ENCODE measurements at regions of chr12 and their contacts with region 1.

Region 1: GRCh38 chr12:93569656-93570551 is 2.6 kb upstream of the SOCS2 start:
- DNase-seq: peak in 1 of 2 donors; percentile 95
- H3K4me3 ChIP-seq: peak overlapping the region; percentile 70 to 94
- H3K27ac ChIP-seq: peak overlapping the region; percentile 99
- H3K4me1 ChIP-seq: no peaks in the 10 kb centered on the region
- H3K27me3 ChIP-seq: no peaks in the 10 kb centered on the region
- CTCF ChIP-seq: peak; percentile 55 to 75 (median 75)
- POLR2A ChIP-seq: no peak

Region 2: GRCh38 chr12:93591137-93591868 is 21.4 kb after region 1 on chr12:
- intact Hi-C with region 1: loop called (anchors 2 kb)
- DNase-seq: peak in 1 of 2 donors; percentile 94
- H3K4me3 ChIP-seq: peak overlapping the region; percentile 51 to 62
- H3K27ac ChIP-seq: peak overlapping the region; percentile 89
- H3K4me1 ChIP-seq: peaks cover 34% of the 10 kb centered on the region
- H3K27me3 ChIP-seq: no peaks in the 10 kb centered on the region
- CTCF ChIP-seq: no peak
- POLR2A ChIP-seq: peak in 1 of 2 donors; percentile 63

Region 3: GRCh38 chr12:93677195-93678064 is 107.5 kb after region 1 on chr12 and contains the start of gene CRADD:
- intact Hi-C with region 1: loop called (anchors 5 kb)
- DNase-seq: peak in 1 of 2 donors; percentile 96
- H3K4me3 ChIP-seq: peak within 1 kb of the TSS; percentile 66 to 76
- H3K27ac ChIP-seq: peak within 1 kb of the TSS; percentile 93
- H3K4me1 ChIP-seq: peaks cover 42% of the 10 kb centered on the region
- H3K27me3 ChIP-seq: no peaks in the 10 kb centered on the region
- CTCF ChIP-seq: no peak
- POLR2A ChIP-seq: peak in 1 of 2 donors; percentile 83
- total RNA-seq, gene CRADD: 40.8 TPM

Region 4: DNA sequence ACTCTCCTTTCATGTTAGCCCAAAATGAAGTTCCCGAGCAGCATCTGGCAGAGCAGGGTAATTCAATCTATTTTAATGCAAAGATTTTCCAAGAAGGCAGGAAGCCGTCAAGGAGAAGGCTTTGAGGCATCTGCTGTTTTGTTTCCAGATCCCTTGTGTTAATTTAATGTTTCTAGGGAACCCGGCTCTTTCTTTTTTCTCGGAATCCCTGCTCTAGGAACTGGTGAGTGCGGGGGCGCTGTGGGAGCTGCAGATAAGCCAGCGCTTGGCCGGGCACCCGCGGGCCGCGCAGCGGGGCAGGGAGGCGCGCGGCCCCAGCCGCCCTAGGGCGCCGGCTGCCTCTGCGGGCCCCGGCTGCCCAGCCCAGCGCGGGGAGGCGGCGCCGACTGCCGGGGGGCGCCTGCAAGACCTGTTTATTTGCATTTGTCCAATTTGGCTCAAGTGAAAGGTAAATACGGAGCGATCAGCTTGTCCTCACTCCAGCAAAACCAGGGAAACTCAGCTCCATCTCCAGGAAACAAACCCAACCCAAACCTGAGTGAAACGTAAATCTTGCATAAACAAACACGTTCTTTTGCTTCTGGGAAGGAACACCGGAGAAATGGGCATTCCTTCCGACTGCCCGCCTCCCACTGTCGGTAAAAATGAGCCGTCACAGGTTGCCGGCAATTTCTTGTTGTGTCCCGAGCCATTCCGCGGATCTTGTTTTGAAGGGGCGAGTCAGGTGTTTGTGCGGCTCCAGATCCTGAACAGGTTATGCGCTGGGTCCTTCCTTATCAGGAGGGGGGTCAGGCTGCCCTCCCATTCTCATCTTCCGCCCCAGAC is 172.4 kb after region 1 on chr12:
- intact Hi-C with region 1: loop called (anchors 2 kb)
- DNase-seq: no peak
- H3K4me3 ChIP-seq: peak overlapping the region; percentile 58 to 63
- H3K27ac ChIP-seq: peak overlapping the region; percentile 97
- H3K4me1 ChIP-seq: peaks cover 51% of the 10 kb centered on the region
- H3K27me3 ChIP-seq: no peaks in the 10 kb centered on the region
- CTCF ChIP-seq: no peak
- POLR2A ChIP-seq: no peak

Region 5: GRCh38 chr12:93766796-93767523 is 197.1 kb after region 1 on chr12:
- intact Hi-C with region 1: loop called (anchors 5 kb)
- DNase-seq: no peak
- H3K4me3 ChIP-seq: no peak overlapping the region
- H3K27ac ChIP-seq: peak overlapping the region; percentile 36
- H3K4me1 ChIP-seq: peaks cover 19% of the 10 kb centered on the region
- H3K27me3 ChIP-seq: no peaks in the 10 kb centered on the region
- CTCF ChIP-seq: peak; percentile 22 to 57 (median 31)
- POLR2A ChIP-seq: no peak

Region 6: DNA sequence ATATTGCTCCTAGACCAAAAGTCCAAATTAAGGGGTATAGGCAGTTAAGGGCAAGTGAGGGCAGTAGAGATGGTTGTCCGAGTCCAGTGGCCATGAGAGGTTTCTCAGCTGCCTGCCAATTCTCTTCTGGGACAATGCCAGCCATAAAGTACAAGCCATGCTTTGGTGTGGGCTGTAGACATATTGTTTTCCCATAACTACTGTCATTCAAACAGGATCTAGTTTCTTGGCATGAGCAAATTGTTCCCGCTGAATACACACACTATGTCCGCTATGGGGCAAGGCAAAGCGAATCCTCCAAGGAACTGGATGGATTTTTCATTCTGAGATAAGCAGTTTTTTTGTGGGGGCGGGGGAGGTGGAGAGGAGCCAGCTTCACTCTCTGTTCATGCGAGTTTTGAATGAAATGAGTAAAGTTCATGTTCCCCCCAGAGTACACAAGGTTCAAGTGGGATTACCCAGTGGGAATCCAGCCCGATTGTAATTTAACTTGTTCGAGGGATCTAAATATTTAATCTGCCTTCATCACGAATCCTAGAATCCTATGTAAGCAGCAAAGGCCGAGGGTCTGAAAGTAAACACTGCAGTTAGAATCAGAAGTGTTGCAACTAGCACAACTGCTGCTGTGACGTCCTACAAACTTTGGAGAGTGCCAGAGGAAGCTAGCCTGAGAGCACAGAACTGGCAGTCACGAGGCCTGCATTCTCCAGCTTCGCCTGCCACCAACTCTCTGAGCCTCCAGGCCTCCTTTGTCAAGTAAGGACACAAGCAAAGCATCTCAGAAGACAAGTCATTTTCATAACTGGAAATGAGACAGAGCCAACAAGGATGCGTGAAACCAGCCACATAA is 244.3 kb after region 1 on chr12:
- intact Hi-C with region 1: loop called (anchors 10 kb)
- DNase-seq: peak in 1 of 2 donors; percentile 95
- H3K4me3 ChIP-seq: peak overlapping the region in 1 of 2 donors; percentile 20
- H3K27ac ChIP-seq: peak overlapping the region; percentile 84
- H3K4me1 ChIP-seq: peaks cover 68% of the 10 kb centered on the region
- H3K27me3 ChIP-seq: no peaks in the 10 kb centered on the region
- CTCF ChIP-seq: no peak
- POLR2A ChIP-seq: no peak

Region 7: GRCh38 chr12:94101738-94102660 is 532.1 kb after region 1 on chr12:
- intact Hi-C with region 1: loop called (anchors 5 kb)
- DNase-seq: peak in 1 of 2 donors; percentile 90
- H3K4me3 ChIP-seq: peak overlapping the region; percentile 64 to 71
- H3K27ac ChIP-seq: peak overlapping the region; percentile 79
- H3K4me1 ChIP-seq: peaks cover 13% of the 10 kb centered on the region
- H3K27me3 ChIP-seq: no peaks in the 10 kb centered on the region
- CTCF ChIP-seq: peak; percentile 79 to 88 (median 86)
- POLR2A ChIP-seq: no peak